PC-9 (cell line): ENCODE measurements at regions of chr7 and their contacts with region 1.

Region 1: GRCh38 chr7:142782922-142783900 is 12.4 kb downstream of the PRSS2 start:
- DNase-seq: peak; percentile 88 to 93
- H3K4me3 ChIP-seq: peak overlapping the region; percentile 41; the same call in 1 of the 2 replicates
- H3K27ac ChIP-seq: no peak overlapping the region
- H3K4me1 ChIP-seq: peaks cover 10% of the 10 kb centered on the region
- H3K27me3 ChIP-seq: no peaks in the 10 kb centered on the region
- CTCF ChIP-seq: peak; percentile 99

Region 2: GRCh38 chr7:142323706-142324105 is 459.5 kb before region 1 on chr7:
- CTCF ChIA-PET with region 1: interaction called, 8 read pairs
- POLR2A ChIA-PET with region 1: no interaction called
- intact Hi-C with region 1: loop called (anchors 1 kb)
- DNase-seq: peak; percentile 66 to 85
- H3K4me3 ChIP-seq: no peak overlapping the region
- H3K27ac ChIP-seq: no peak overlapping the region
- H3K4me1 ChIP-seq: peaks cover 13% of the 10 kb centered on the region
- H3K27me3 ChIP-seq: no peaks in the 10 kb centered on the region
- CTCF ChIP-seq: peak; percentile 88

Region 3: GRCh38 chr7:142420559-142421362 is 362.4 kb before region 1 on chr7:
- CTCF ChIA-PET with region 1: interaction called, 12 read pairs
- POLR2A ChIA-PET with region 1: no interaction called
- intact Hi-C with region 1: loop called (anchors 1 kb)
- DNase-seq: peak; percentile 74 to 79
- H3K4me3 ChIP-seq: no peak overlapping the region
- H3K27ac ChIP-seq: 0 out of 2 replicates have a peak overlapping the region, but pooled peaks have one; percentile 22
- H3K4me1 ChIP-seq: peaks cover 9% of the 10 kb centered on the region
- H3K27me3 ChIP-seq: no peaks in the 10 kb centered on the region
- CTCF ChIP-seq: peak; percentile 59; the same call in 1 of the 2 replicates

Region 4: DNA sequence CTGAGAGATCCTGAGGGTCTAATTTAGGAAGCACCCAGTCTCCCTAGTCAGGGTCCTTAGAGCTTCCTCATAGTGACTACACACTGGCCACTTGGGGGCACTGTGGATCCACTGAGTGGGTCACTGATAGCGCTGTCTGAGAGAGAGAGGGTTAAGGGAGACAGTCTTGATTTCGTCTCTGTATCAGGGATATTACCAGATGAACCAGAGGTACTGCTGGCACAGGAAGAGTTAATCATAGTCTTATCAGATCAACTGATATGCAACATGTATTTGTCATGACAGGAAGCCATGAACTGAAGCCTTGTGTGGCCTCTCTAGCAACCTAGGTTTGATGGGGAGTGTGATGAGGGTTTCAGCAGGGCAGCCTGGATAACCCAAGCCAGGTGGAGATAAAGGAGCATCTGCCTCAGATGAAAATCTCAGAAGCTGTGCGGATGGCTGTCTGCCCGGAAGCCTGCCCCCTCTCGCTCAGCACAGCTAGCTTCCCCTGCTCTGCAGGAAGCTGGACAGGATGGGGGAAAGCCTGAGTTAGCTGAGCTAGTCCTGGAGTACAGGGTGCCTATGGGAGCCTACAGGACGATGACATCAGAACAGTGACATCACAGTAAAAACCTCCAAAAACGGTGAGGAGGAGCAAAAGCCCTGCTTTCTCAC is 248.0 kb before region 1 on chr7:
- CTCF ChIA-PET with region 1: interaction called, 42 read pairs
- POLR2A ChIA-PET with region 1: no interaction called
- intact Hi-C with region 1: loop called (anchors 1 kb)
- DNase-seq: peak; percentile 84 to 89
- H3K4me3 ChIP-seq: no peak overlapping the region
- H3K27ac ChIP-seq: no peak overlapping the region
- H3K4me1 ChIP-seq: peaks cover 31% of the 10 kb centered on the region
- H3K27me3 ChIP-seq: no peaks in the 10 kb centered on the region
- CTCF ChIP-seq: peak; percentile 98

Region 5: DNA sequence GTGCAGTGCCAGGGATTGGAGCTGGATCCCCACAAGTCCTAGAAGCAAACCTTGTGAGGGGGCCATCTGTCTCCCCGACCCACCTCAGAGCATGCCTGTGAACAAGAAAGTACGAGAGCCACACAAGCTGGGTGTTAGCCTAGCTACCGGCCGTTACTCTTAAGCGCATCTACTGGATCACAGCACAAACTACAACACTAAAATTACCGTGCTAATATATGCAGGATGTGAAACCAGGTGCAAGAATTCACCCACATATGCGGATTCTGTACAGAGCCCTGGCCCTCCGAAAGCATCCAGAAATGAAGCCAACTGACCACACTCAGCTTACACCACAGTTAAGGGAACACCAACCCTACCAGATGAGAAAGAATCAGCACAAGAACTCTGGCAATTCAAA is 49.9 kb before region 1 on chr7:
- CTCF ChIA-PET with region 1: interaction called, 11 read pairs
- POLR2A ChIA-PET with region 1: no interaction called
- intact Hi-C with region 1: no loop called
- DNase-seq: no peak
- H3K4me3 ChIP-seq: no peak overlapping the region
- H3K27ac ChIP-seq: no peak overlapping the region
- H3K4me1 ChIP-seq: no peaks in the 10 kb centered on the region
- H3K27me3 ChIP-seq: no peaks in the 10 kb centered on the region
- CTCF ChIP-seq: no peak

Region 6: GRCh38 chr7:142819530-142819929 is 36.3 kb after region 1 on chr7:
- CTCF ChIA-PET with region 1: no interaction called
- POLR2A ChIA-PET with region 1: no interaction called
- intact Hi-C with region 1: no loop called
- DNase-seq: no peak
- H3K4me3 ChIP-seq: no peak overlapping the region
- H3K27ac ChIP-seq: no peak overlapping the region
- H3K4me1 ChIP-seq: peaks cover 9% of the 10 kb centered on the region
- H3K27me3 ChIP-seq: no peaks in the 10 kb centered on the region
- CTCF ChIP-seq: no peak

Region 7: DNA sequence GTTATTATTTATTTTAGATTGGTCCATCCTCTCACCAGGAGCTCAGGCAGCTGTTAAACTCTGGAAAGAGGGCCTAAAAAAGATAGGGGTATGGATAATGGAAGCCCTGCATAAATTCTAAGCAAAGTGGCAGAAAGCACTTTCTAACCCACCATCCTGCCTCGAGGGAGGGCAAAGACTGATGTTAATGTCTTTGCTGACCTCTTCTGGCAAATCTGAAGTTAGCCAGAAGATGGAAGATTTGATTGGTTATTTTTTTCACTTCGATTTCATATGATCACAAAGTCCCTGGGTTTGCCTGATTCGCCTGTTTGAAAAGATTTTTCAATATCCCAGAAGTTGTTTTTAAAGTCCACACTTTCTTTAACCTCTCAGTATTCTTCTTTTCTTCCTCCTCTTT is 218.9 kb after region 1 on chr7:
- CTCF ChIA-PET with region 1: interaction called, 4 read pairs
- POLR2A ChIA-PET with region 1: no interaction called
- intact Hi-C with region 1: loop called (anchors 1 kb)
- DNase-seq: peak in 1 of 2 experiments; percentile 12
- H3K4me3 ChIP-seq: no peak overlapping the region
- H3K27ac ChIP-seq: no peak overlapping the region
- H3K4me1 ChIP-seq: peaks cover 4% of the 10 kb centered on the region; the same call in 1 of the 2 replicates
- H3K27me3 ChIP-seq: no peaks in the 10 kb centered on the region
- CTCF ChIP-seq: peak; percentile 73